PC-3 (cell line): ENCODE measurements at regions of chr6 and their contacts with region 1.

Region 1: DNA sequence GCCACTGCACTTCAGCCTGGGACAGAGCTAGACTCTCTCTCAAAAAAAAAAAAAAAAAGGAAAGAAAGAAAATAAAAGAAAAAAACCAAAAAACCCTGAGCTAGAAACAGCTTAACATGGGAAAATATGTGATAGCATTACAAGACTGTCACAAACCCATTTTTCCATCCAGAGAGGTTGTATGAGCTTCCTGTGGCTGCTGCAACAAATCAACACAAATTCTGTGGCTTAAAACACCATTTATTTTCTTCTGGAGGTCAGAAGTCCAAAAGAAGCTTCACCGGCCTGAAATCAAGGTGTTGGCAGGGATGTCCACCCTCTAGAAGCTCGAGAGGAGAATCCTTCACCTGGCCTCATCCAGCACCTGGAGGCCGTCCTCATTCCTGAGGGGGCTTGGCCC is 21.7 kb upstream of the SSR1 start:
- DNase-seq: no peak
- ATAC-seq: no peak
- H3K4me3 ChIP-seq: no peak overlapping the region
- H3K27ac ChIP-seq: no peak overlapping the region
- H3K4me1 ChIP-seq: no peaks in the 10 kb centered on the region
- H3K27me3 ChIP-seq: no peaks in the 10 kb centered on the region
- CTCF ChIP-seq: no peak

Region 2: GRCh38 chr6:7439228-7439627 is 104.5 kb after region 1 on chr6:
- CTCF ChIA-PET with region 1: interaction called, 12 read pairs
- POLR2A ChIA-PET with region 1: no interaction called
- intact Hi-C with region 1: no loop called
- DNase-seq: no peak
- ATAC-seq: no peak
- H3K4me3 ChIP-seq: no peak overlapping the region
- H3K27ac ChIP-seq: no peak overlapping the region
- H3K4me1 ChIP-seq: no peaks in the 10 kb centered on the region
- H3K27me3 ChIP-seq: no peaks in the 10 kb centered on the region
- CTCF ChIP-seq: no peak